Gastrocnemius medialis (tissue), 4 donors: ENCODE measurements at regions of chr1 and their contacts with region 1.

Region 1: GRCh38 chr1:207336559-207337467 is 15.3 kb downstream of the CD55 start:
- DNase-seq: no peak
- ATAC-seq: no peak
- H3K4me3 ChIP-seq: no peak overlapping the region
- H3K27ac ChIP-seq: peak overlapping the region; percentile 15 to 70 (median 42)
- H3K4me1 ChIP-seq: peaks cover 0 to 13% of the 10 kb centered on the region in 2 donors
- H3K27me3 ChIP-seq: no peaks in the 10 kb centered on the region
- CTCF ChIP-seq: no peak
- POLR2A ChIP-seq: no peak

Region 2: GRCh38 chr1:206716870-206717673 is 619.7 kb before region 1 on chr1:
- in situ Hi-C with region 1: loop called in 1 of 4 experiments (anchors 25 kb)
- intact Hi-C with region 1: no loop called
- DNase-seq: no peak
- ATAC-seq: no peak
- H3K4me3 ChIP-seq: no peak overlapping the region
- H3K27ac ChIP-seq: peak overlapping the region; percentile 76 to 97 (median 85)
- H3K4me1 ChIP-seq: peaks cover 90% of the 10 kb centered on the region in 2 donors
- H3K27me3 ChIP-seq: no peaks in the 10 kb centered on the region
- CTCF ChIP-seq: no peak
- POLR2A ChIP-seq: no peak

Region 3: GRCh38 chr1:207052911-207053769 is 283.7 kb before region 1 on chr1 and contains the start of gene PFKFB2:
- in situ Hi-C with region 1: no loop called
- intact Hi-C with region 1: no loop called
- DNase-seq: peak; percentile 97 to 98
- ATAC-seq: peak; percentile 70 to 73
- H3K4me3 ChIP-seq: peak within 1 kb of the TSS; percentile 74 to 82 (median 76)
- H3K27ac ChIP-seq: peak within 1 kb of the TSS; percentile 93 to 95 (median 94)
- H3K4me1 ChIP-seq: peaks cover 29 to 50% of the 10 kb centered on the region in 2 donors
- H3K27me3 ChIP-seq: no peaks in the 10 kb centered on the region
- CTCF ChIP-seq: peak; percentile 42 to 58 (median 52)
- POLR2A ChIP-seq: peak; percentile 98
- total RNA-seq, gene PFKFB2: 35.5 to 40.3 (median 37.6) TPM